ENCODE measurements at regions of chr9 and their contacts with region 1.

Region 1: GRCh38 chr9:137029058-137029936 is 1.3 kb upstream of the ABCA2 start:
- DNase-seq: peak; percentile 50 to 70 (median 63)
- H3K4me3 ChIP-seq: peak overlapping the region; percentile 28 to 83 (median 73)
- H3K27ac ChIP-seq: peak overlapping the region; percentile 77 to 87
- H3K4me1 ChIP-seq: peaks cover 0 to 85% (median 79%) of the 10 kb centered on the region in 4 experiments
- H3K27me3 ChIP-seq: no peaks in the 10 kb centered on the region

Region 2: GRCh38 chr9:136429683-136430590 is 599.4 kb before region 1 on chr9:
- CTCF ChIA-PET with region 1: no interaction called
- POLR2A ChIA-PET with region 1: no interaction called
- DNase-seq: no peak
- H3K4me3 ChIP-seq: no peak overlapping the region
- H3K27ac ChIP-seq: no peak overlapping the region
- H3K4me1 ChIP-seq: no peaks in the 10 kb centered on the region
- H3K27me3 ChIP-seq: no peaks in the 10 kb centered on the region

Region 3: DNA sequence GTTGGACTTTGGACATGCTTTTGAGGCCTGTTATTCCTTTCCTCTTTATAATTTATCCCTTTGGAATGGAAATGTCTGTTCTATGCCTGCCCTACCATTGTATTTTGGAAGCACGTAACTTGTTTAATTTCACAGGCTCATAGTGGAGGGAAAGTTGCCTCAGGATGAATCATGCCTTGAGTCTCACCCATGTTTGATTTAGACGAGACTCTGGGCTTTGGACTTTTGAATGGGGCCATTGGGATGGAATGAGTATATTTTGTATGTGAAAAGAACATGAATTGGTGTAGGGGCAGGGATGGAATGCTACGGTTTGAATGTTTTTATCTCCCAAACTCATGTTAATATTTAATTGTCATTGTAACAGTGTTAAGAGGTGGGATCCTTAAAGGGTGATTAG is 95.0 kb before region 1 on chr9:
- CTCF ChIA-PET with region 1: no interaction called
- POLR2A ChIA-PET with region 1: no interaction called
- DNase-seq: no peak
- H3K4me3 ChIP-seq: no peak overlapping the region
- H3K27ac ChIP-seq: no peak overlapping the region
- H3K4me1 ChIP-seq: peaks cover 0 to under 1% (median 0%) of the 10 kb centered on the region in 4 experiments
- H3K27me3 ChIP-seq: no peaks in the 10 kb centered on the region

Region 4: GRCh38 chr9:136944519-136945279 is 84.6 kb before region 1 on chr9 and contains the starts of genes C8G and FBXW5:
- CTCF ChIA-PET with region 1: interaction called, 61 read pairs
- POLR2A ChIA-PET with region 1: no interaction called
- DNase-seq: peak; percentile 89 to 95 (median 94)
- H3K4me3 ChIP-seq: peak within 1 kb of the TSS; percentile 64 to 91 (median 81)
- H3K27ac ChIP-seq: peak within 1 kb of the TSS; percentile 54 to 81
- H3K4me1 ChIP-seq: peaks cover 0 to 29% (median 25%) of the 10 kb centered on the region in 4 experiments
- H3K27me3 ChIP-seq: no peaks in the 10 kb centered on the region

Region 5: GRCh38 chr9:136991993-136992818 is 37.1 kb before region 1 on chr9 and contains the start of gene PAXX:
- CTCF ChIA-PET with region 1: interaction called, 13 read pairs
- POLR2A ChIA-PET with region 1: no interaction called
- DNase-seq: peak; percentile 87 to 92 (median 92)
- H3K4me3 ChIP-seq: peak within 1 kb of the TSS; percentile 42 to 79 (median 71)
- H3K27ac ChIP-seq: peak within 1 kb of the TSS in 1 of 2 experiments; percentile 64
- H3K4me1 ChIP-seq: peaks cover 0 to 41% (median 36%) of the 10 kb centered on the region in 4 experiments
- H3K27me3 ChIP-seq: peaks cover 0 to 41% (median 9%) of the 10 kb centered on the region in 5 experiments

Region 6: GRCh38 chr9:137000177-137000883 is 29.0 kb before region 1 on chr9:
- CTCF ChIA-PET with region 1: interaction called, 12 read pairs
- POLR2A ChIA-PET with region 1: interaction called, 4 read pairs
- DNase-seq: peak in 2 of 3 donors; percentile 70 to 72
- H3K4me3 ChIP-seq: no peak overlapping the region
- H3K27ac ChIP-seq: no peak overlapping the region
- H3K4me1 ChIP-seq: peaks cover 0 to 46% (median 40%) of the 10 kb centered on the region in 4 experiments
- H3K27me3 ChIP-seq: peaks cover 0 to 17% (median 0%) of the 10 kb centered on the region in 5 experiments

Region 7: DNA sequence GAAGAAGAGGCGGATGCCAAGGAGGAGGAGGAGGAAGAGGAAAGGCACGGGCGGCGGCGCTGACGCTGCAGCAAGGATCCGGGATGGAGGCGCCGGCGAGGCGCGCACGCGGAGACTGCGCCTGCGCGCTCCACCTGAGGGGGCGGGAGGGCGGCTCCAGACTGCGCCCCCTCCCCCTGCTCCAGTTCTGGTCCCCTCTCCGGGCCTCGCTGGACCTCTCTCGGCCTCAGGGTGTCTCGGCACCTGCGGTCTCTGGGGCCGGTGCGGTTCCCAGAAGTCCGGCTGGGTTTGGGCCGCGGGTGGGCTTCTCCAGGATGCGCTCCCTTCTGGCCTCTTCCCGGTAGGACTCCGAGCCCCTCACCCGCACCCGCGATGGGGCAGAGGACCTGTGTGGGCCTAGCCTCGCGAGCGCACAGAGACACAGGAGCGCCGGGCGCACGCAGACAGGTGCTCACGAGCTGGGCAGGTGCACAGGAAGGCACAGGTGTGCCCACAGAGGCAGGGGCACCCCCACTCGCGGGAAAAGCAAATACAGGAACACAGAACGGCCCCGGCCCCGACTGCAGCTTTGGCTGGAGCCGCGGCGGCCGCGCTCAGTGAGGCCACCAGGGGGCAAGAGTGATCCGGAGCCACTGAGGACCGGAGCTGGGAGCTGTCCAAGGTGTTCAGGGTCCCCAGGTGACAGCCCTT is 16.9 kb after region 1 on chr9 and contains the start of gene NPDC1:
- CTCF ChIA-PET with region 1: interaction called, 109 read pairs
- POLR2A ChIA-PET with region 1: interaction called, 4 read pairs
- DNase-seq: peak; percentile 72 to 86 (median 86)
- H3K4me3 ChIP-seq: peak within 1 kb of the TSS; percentile 51 to 85 (median 73)
- H3K27ac ChIP-seq: no peak within 1 kb of the TSS
- H3K4me1 ChIP-seq: peaks cover 0 to 50% (median 45%) of the 10 kb centered on the region in 4 experiments
- H3K27me3 ChIP-seq: peaks cover 0 to 39% (median 12%) of the 10 kb centered on the region in 5 experiments